ENCODE measurements at regions of chr11 and their contacts with region 1.

Region 1: DNA sequence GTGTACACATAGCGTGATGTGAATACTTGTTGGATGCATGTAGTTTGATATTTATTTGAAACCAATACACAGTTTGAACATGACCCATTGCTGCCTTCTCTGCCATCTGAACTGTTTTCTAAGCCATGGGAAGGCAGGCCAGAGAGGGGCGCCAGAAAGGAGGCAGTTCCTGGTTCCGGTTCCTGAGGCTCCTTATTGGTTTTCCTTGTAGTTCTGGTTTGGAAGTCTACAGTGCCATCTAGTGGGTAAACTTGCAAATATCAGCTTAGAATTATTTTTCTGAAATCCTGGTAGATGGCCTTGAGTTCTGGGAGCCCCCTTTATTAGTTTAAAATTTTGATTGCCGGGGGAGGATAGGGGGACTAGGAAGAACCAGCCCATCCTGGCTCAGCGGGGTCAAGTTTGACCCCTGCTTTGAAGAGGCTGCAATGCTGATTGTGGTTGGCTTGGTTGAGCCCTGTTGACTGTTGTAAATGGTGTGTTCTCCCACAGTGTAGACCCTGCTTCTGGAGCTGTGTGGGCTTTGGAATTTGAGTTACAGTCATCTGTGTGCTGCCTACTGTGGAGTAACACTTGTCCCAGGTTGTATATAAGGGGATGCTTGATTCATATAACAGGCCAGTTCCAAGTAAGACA is 48.4 kb downstream of the GRAMD1B start:
- DNase-seq: peak; percentile 56 to 61
- H3K4me3 ChIP-seq: no peak overlapping the region
- H3K27ac ChIP-seq: no peak overlapping the region
- H3K4me1 ChIP-seq: peaks cover under 1 to 18% of the 10 kb centered on the region in 2 donors
- H3K27me3 ChIP-seq: no peaks in the 10 kb centered on the region
- CTCF ChIP-seq: peak; percentile 62 to 84 (median 74)
- POLR2A ChIP-seq: no peak

Region 2: GRCh38 chr11:123103326-123103980 is 375.0 kb before region 1 on chr11:
- intact Hi-C with region 1: loop called (anchors 10 kb)
- DNase-seq: peak; percentile 55 to 65
- H3K4me3 ChIP-seq: no peak overlapping the region
- H3K27ac ChIP-seq: peak overlapping the region in 1 of 3 donors; percentile 38
- H3K4me1 ChIP-seq: peaks cover 10 to 22% of the 10 kb centered on the region in 2 donors
- H3K27me3 ChIP-seq: no peaks in the 10 kb centered on the region
- CTCF ChIP-seq: peak in 5 of 6 experiments; percentile 20 to 73 (median 72)
- POLR2A ChIP-seq: no peak

Region 3: DNA sequence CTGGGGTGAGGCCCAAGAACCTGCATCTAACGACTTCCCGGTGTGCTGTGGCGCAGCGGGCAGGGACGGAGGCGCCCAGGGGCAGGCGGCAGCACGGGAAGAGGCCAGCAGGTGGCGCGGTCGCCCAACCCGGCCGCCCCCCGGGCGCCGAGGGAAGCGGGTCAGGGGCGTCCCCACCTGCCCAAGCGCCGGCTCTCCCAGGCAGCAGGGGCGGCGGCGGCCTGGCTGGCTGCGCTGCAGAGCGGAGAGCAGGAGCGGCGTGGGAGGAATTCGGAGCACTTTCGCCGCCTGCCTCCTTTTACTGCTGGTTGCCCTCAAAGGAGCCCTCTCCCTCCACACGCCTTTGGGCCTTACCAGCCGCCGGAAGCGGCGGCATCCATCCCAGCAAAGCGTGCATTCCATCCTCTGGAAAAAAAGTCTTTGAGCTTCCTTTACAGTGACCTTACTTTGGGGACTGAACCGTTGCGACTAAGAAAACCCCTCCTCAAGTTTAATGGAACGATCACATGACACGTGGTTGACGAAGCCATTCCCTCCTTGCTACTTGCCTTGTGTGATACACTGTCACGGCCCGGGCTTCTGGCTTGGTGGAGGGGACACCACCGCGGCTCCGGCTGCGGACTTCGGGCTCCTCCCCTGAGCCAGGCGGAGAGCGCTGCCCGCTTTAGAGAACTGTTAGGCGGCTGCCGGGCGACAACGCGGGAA is 176.6 kb before region 1 on chr11:
- intact Hi-C with region 1: loop called (anchors 5 kb)
- DNase-seq: peak; percentile 70 to 81
- H3K4me3 ChIP-seq: peak overlapping the region in 1 of 3 donors; percentile 22
- H3K27ac ChIP-seq: peak overlapping the region in 1 of 3 donors; percentile 38
- H3K4me1 ChIP-seq: peaks cover 8 to 22% of the 10 kb centered on the region in 2 donors
- H3K27me3 ChIP-seq: no peaks in the 10 kb centered on the region
- CTCF ChIP-seq: peak; percentile 34 to 99 (median 82)
- POLR2A ChIP-seq: no peak

Region 4: DNA sequence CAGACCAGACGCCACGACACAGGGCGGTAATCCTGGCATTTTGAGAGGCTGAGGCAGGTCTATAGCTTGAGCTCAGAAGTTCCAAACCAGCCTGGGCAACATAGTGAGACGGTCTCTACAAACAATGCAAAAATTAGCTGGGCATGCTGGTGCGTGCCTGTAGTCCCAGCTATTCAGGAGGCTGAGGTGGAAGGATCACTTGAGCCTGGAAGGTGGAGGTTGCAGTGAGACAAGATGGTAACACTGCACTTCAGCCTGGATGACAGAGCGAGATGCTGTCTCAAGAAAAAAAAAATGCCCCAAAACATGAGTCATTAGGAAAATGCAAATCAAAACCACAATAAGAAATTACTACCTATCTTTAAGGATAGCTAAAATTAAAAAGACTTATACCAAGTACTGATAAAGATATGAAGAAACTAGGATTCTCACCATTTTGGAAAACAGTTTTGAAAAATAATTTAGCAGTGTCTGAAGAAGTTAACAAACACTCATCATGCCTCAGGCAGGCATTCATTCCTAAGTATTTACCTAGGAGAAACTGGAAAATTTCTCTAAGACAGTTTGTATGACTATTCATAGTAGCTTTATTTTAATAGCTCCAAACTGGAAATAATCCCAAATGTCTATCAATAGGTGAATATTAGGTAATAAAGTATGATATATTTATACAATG is 140.0 kb before region 1 on chr11:
- intact Hi-C with region 1: no loop called
- DNase-seq: no peak
- H3K4me3 ChIP-seq: no peak overlapping the region
- H3K27ac ChIP-seq: no peak overlapping the region
- H3K4me1 ChIP-seq: no peaks in the 10 kb centered on the region
- H3K27me3 ChIP-seq: no peaks in the 10 kb centered on the region
- CTCF ChIP-seq: no peak
- POLR2A ChIP-seq: no peak

Region 5: GRCh38 chr11:123413636-123414035 is 64.8 kb before region 1 on chr11:
- intact Hi-C with region 1: loop called (anchors 5 kb)
- DNase-seq: no peak
- H3K4me3 ChIP-seq: no peak overlapping the region
- H3K27ac ChIP-seq: no peak overlapping the region
- H3K4me1 ChIP-seq: peaks cover 5 to 7% of the 10 kb centered on the region in 2 donors
- H3K27me3 ChIP-seq: no peaks in the 10 kb centered on the region
- CTCF ChIP-seq: no peak
- POLR2A ChIP-seq: no peak

Region 6: GRCh38 chr11:123841174-123841573 is 362.7 kb after region 1 on chr11:
- intact Hi-C with region 1: no loop called
- DNase-seq: no peak
- H3K4me3 ChIP-seq: no peak overlapping the region
- H3K27ac ChIP-seq: no peak overlapping the region
- H3K4me1 ChIP-seq: no peaks in the 10 kb centered on the region
- H3K27me3 ChIP-seq: no peaks in the 10 kb centered on the region
- CTCF ChIP-seq: no peak
- POLR2A ChIP-seq: no peak